Esophagus muscularis mucosa (tissue), 4 donors: ENCODE measurements at regions of chr6 and their contacts with region 1.

Region 1: DNA sequence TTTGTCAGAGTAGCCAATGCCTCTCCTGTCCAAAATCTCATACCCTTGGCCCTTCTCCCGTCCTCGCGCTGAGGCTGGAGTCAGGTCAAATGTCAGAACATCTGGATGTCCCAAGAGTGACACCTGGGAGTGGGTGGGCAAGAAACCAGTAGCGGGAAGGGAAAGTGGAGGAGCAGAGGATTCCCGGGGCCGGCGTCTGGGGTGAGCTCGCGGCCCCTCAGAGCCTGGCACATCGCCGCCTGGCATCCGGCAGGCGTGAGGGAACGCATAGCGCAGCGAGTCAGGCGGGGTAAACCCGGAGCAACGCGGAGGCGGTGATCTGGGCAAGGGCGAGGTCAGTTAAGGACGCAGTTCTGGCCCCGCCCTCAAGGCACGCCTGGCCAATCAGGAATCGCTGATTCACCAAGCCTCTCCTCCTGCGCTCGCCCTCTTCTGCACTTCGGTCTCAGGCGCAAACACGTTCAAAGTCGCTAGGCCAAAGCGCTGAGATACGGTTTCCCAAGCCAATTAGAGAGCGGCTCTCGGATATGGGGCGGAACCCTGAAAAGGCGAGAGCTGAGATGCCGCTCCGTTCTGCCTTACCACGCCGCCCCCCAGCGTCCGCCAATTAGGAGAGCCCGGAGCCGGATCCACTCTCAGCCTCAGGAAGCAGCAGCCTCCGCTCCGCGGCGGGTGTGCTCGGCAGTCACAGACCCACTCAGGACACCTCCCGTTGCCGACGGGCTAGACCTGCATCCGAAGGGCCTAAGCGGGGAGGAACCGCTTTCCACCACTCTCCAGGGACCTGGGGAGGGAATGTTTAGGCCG is 22.5 kb downstream of the VPS52 start:
- DNase-seq: peak; percentile 100
- H3K4me3 ChIP-seq: peak overlapping the region; percentile 58 to 66 (median 62)
- H3K27ac ChIP-seq: peak overlapping the region; percentile 92 to 98 (median 94)
- H3K4me1 ChIP-seq: peaks cover 24 to 36% (median 31%) of the 10 kb centered on the region in 4 donors
- H3K27me3 ChIP-seq: peaks cover 0 to 10% (median 0%) of the 10 kb centered on the region in 4 donors
- CTCF ChIP-seq: peak in 1 of 3 experiments; percentile 39
- EP300 ChIP-seq: no peak
- POLR2A ChIP-seq: peak; percentile 31

Region 2: DNA sequence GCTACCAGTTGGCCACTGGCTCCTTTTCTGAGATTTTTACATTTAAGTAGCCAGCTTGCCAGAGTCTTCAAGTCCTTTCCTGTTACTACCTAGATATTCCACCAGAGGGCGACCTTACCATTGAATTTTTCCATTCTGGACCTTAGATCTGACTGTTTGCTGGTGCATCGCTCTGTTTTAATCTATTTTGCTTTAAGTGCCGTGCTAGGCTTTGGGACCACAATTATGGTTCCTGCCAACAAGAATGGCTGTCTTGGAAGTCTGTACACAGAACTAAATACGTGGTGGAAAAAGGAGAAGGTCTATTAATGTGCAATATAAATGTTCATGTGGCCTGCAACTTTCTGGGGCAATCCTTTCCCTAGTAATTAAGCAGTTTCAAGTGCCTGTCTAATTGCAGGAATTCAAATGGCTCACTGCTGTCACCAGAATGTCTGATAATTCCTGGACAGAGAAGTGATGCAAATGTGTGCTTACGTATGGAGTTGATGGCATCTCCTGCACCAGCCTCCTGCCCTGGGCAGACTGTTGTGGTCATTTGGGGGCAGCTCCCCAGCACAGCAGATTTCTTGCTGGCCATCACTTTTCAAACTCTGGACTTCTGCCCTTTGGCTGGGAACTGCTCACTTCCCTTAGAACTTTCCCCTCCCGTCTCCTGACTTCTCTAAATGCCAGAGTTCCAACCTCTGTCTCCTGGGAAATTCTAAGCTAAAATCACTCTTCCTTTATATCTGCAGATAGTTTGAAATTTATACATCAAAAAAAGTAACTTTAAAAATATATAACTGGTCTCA is 234.1 kb before region 1 on chr6:
- intact Hi-C with region 1: loop called (anchors 5 kb)
- DNase-seq: no peak
- H3K4me3 ChIP-seq: no peak overlapping the region
- H3K27ac ChIP-seq: peak overlapping the region in 2 of 4 donors; percentile 3 to 22
- H3K4me1 ChIP-seq: peaks cover 26 to 31% (median 28%) of the 10 kb centered on the region in 4 donors
- H3K27me3 ChIP-seq: peaks cover 0 to 64% (median 4%) of the 10 kb centered on the region in 4 donors
- CTCF ChIP-seq: peak; percentile 85 to 88 (median 87)
- EP300 ChIP-seq: no peak
- POLR2A ChIP-seq: no peak

Region 3: GRCh38 chr6:33118525-33119123 is 130.5 kb before region 1 on chr6:
- intact Hi-C with region 1: loop called (anchors 5 kb)
- DNase-seq: no peak
- H3K4me3 ChIP-seq: no peak overlapping the region
- H3K27ac ChIP-seq: no peak overlapping the region
- H3K4me1 ChIP-seq: peaks cover 0 to 12% (median 7%) of the 10 kb centered on the region in 4 donors
- H3K27me3 ChIP-seq: peaks cover 0 to 47% (median 25%) of the 10 kb centered on the region in 4 donors
- CTCF ChIP-seq: peak; percentile 83 to 85 (median 85)
- EP300 ChIP-seq: no peak
- POLR2A ChIP-seq: no peak

Region 4: DNA sequence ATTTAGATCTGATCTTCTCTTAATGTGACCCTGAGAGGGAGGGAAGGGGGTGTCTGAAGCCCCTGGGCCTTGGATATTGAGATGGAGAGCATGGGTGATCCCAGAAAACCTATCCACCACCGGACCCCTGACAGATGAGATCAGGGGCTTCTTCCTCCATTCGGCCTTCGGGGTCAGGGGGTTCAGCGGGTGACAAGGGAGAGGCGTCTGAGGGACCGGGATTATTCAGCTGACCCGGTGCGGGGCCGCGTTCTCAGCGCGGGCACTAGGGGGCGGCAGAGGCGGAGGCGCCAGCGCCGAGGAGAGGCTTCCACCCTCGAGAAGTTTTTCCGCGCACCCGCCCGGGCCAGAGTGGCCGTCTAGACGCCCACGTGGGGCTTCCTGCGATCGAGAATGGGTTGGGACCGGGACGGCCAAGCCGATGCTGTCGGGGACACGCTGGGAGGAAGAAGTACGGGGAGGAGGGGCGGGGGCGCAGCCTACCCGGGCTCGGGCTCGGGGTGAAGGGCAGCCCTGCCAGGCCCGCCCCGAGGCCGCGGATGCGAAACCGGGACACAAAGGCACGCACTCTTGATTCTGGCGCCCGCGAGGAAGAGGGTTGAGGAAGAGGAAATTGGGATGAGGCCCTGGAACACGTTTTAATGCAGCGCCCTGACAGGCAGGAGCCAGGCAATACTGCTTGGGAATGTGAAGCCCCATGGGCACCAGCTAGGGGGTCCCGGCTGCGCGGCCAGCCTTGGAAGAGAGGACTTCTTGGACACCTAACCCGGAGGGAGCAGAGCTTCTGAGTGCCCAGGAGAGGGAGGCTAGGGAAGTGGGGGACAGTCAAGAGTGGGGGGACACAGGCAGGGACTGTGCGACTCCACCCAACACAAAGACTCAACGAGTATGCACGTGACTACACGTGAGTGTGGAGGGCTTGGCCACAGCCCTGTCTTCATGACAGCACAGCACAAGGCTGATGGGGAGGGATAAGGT is 87.5 kb before region 1 on chr6:
- intact Hi-C with region 1: loop called (anchors 1 kb)
- DNase-seq: no peak
- H3K4me3 ChIP-seq: peak overlapping the region; percentile 49 to 61 (median 55)
- H3K27ac ChIP-seq: peak overlapping the region; percentile 54 to 78 (median 68)
- H3K4me1 ChIP-seq: peaks cover 14 to 22% (median 20%) of the 10 kb centered on the region in 4 donors
- H3K27me3 ChIP-seq: peaks cover 0 to 7% (median 0%) of the 10 kb centered on the region in 4 donors
- CTCF ChIP-seq: peak; percentile 93 to 99 (median 94)
- EP300 ChIP-seq: no peak
- POLR2A ChIP-seq: no peak

Region 5: GRCh38 chr6:33192671-33193602 is 56.2 kb before region 1 on chr6:
- intact Hi-C with region 1: loop called (anchors 5 kb)
- DNase-seq: no peak
- H3K4me3 ChIP-seq: peak overlapping the region; percentile 48 to 55 (median 52)
- H3K27ac ChIP-seq: peak overlapping the region; percentile 53 to 74 (median 62)
- H3K4me1 ChIP-seq: peaks cover 24 to 42% (median 34%) of the 10 kb centered on the region in 4 donors
- H3K27me3 ChIP-seq: peaks cover 0 to 44% (median 5%) of the 10 kb centered on the region in 4 donors
- CTCF ChIP-seq: no peak
- EP300 ChIP-seq: no peak
- POLR2A ChIP-seq: no peak

Region 6: DNA sequence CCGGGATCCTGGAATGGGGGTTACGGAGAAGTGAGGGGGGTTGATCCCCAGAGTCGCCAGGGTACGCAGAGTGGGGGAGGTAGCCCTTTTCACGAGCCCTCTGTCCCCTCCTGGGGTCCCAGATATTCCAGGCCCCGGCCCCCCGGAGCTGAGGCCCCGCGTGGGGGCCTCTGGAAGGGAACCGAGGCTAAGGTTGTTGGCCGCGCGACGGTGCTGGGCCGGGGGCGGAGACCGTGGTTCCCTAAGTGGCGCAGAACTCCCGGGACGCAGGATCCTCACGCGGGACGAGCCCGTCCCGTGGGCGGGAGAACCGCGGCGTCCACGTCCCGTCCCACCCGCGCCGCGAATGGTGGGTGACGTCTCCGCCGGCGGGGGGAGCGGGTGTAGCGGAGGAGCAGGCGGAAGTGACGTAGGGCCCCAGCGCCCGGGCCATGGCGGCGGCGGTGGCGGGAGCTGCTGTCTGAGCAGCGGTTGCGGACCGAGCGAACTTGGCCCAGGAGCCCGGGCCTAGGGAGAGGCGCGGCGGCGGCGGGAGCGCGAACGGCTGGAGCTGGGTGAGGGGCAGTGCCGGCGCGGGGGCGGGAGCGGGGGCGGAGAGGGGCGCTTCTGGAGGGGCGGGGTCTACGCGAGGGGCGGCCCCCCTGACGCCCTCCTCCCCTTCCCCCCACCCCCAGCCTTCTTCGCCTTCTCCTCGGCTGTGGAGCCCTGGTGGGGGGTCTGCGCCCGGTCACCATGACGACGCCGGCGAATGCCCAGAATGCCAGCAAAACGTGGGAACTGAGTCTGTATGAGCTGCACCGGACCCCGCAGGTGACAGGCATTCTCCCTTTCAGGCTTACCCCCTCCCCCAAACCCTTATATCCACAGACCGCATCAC is 40.8 kb before region 1 on chr6 and contains the start of gene RING1:
- intact Hi-C with region 1: no loop called
- DNase-seq: peak; percentile 96
- H3K4me3 ChIP-seq: peak within 1 kb of the TSS; percentile 76 to 96 (median 93)
- H3K27ac ChIP-seq: peak within 1 kb of the TSS; percentile 92 to 97 (median 95)
- H3K4me1 ChIP-seq: peaks cover 36 to 67% (median 51%) of the 10 kb centered on the region in 4 donors
- H3K27me3 ChIP-seq: no peaks in the 10 kb centered on the region
- CTCF ChIP-seq: no peak
- EP300 ChIP-seq: no peak
- POLR2A ChIP-seq: peak; percentile 99
- total RNA-seq, gene RING1: 15.0 to 25.3 (median 20.6) TPM

Region 7: DNA sequence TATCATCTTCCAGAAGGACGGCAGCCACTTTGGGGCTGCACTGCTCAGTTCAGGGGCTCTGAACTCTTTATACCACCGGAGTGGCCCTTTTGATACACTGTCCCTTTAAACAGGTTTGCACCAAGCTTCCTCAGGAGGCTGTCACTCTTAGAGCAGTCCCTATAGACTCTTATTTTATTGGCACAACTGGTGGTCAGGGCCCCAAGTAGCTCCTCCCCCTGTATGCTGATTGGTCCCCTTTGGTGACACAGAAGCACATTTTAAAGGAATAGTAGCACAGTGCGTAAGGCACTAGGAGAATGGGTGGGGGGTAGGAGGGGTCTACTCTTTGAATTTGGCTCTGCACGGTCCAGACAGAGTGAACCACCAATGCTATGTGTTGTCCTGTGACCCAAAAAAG is 677.3 kb after region 1 on chr6:
- intact Hi-C with region 1: no loop called
- DNase-seq: no peak
- H3K4me3 ChIP-seq: no peak overlapping the region
- H3K27ac ChIP-seq: no peak overlapping the region
- H3K4me1 ChIP-seq: no peaks in the 10 kb centered on the region
- H3K27me3 ChIP-seq: peaks cover 0 to 11% (median 0%) of the 10 kb centered on the region in 4 donors
- CTCF ChIP-seq: no peak
- EP300 ChIP-seq: no peak
- POLR2A ChIP-seq: no peak